Activated CD8-positive, alpha-beta T cell treated with anti-CD3 and anti-CD28 coated beads, Interleukin-2, amount 10 ng/mL, durations not matched to agents 7 days and 5 days (primary cell): ENCODE measurements at regions of chr20 and their contacts with region 1.

Region 1: DNA sequence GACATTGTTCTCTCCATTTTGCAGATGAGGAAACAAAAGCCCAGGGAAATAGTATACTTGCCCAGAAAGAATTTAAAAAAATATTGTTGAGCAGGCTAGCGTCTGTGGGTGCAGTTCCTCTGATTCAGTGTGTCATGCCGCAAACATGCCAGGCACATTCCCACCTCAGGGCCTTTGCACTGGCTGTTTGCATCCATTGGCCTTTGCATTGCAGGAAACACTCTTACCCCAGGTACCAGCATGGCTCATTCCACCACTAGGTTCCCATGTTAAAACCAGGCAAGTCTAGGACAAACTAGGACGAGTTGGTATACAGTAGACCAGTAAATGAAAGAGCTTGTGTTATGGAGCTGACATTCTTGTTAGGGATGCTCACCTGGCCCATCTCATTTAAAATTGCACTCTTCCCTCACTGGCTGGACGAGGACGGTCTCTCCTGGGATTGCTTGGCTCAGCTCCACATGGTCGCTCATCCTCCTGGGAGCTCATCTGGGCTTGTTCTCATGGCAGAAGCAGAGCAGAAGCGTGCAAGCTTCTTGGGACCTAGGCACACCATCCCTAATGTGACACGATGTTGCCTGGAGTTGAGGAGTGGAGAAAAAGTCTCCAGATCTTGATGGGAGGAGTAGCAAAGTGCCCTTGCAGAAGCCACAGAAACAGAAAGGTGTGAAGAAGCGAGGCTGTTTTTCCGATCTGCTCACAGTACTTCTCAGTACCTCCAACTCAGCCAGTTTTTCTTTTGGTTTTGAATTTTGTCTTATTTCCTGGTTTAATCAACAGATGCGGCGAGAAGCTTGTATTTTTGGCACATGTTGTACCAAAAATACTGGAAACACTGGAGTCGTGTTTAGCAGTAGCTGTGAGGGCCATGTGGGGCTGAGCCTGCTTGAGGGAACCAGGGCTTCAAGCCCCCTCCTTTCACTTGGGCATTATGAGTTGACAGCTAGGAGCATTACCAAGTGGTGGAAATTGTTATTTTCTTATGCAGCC is 13.9 kb downstream of the ZNF831 start:
- DNase-seq: peak; percentile 63
- ATAC-seq: peak; percentile 90
- H3K4me3 Mint-ChIP-seq: peak overlapping the region; percentile 48
- H3K27ac Mint-ChIP-seq: peak overlapping the region; percentile 86
- H3K4me1 Mint-ChIP-seq: peaks cover 73% of the 10 kb centered on the region
- H3K27me3 Mint-ChIP-seq: no peaks in the 10 kb centered on the region

Region 2: DNA sequence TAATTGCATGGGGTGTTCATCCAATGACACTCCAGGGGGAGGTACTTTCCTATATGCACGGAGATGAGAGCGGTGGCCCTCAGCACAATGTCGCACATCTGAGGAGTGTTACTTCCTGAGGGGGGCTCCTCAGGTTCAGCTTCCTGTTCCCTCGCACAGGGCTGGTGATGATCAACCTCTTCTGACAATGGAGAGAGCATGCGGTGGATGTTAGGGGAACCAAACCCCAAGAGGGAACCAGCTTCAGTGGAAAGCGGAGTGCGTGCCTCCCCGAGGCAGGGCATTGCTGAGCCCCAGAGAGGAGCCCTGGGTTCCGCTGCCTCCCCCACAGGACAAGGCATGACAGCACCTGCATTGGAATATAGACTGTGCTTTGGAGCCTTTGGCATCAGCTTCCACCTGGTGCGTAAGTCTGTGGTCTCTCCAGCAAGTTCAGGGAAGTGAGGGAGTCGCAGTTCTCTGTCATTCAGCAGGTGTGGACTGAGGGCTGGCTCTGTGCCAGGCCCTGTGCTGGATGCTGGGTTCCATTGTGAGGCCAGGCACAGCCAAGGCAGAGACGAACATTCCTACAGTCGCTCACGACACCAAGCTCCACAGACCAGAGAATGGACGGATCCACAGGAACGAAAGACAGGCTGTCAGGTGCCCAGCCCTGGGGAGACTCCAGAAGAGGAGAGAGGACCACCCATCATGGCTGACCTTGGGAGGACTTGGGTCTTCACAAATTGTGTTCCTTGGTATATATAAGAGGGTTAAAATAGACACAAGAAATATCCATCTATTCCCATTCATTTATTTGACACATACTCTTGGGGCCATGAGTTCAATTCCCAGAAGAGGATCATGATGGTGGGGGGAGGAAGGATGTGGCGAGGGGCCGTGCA is 17.8 kb before region 1 on chr20:
- CTCF ChIA-PET with region 1: interaction called, 10 read pairs
- POLR2A ChIA-PET with region 1: interaction called, 21 read pairs
- DNase-seq: peak; percentile 82
- ATAC-seq: peak; percentile 74
- H3K4me3 Mint-ChIP-seq: peak overlapping the region; percentile 89
- H3K27ac Mint-ChIP-seq: peak overlapping the region; percentile 97
- H3K4me1 Mint-ChIP-seq: peaks cover 67% of the 10 kb centered on the region
- H3K27me3 Mint-ChIP-seq: no peaks in the 10 kb centered on the region